ENCODE measurements at regions of chr11 and their contacts with region 1.

Region 1: DNA sequence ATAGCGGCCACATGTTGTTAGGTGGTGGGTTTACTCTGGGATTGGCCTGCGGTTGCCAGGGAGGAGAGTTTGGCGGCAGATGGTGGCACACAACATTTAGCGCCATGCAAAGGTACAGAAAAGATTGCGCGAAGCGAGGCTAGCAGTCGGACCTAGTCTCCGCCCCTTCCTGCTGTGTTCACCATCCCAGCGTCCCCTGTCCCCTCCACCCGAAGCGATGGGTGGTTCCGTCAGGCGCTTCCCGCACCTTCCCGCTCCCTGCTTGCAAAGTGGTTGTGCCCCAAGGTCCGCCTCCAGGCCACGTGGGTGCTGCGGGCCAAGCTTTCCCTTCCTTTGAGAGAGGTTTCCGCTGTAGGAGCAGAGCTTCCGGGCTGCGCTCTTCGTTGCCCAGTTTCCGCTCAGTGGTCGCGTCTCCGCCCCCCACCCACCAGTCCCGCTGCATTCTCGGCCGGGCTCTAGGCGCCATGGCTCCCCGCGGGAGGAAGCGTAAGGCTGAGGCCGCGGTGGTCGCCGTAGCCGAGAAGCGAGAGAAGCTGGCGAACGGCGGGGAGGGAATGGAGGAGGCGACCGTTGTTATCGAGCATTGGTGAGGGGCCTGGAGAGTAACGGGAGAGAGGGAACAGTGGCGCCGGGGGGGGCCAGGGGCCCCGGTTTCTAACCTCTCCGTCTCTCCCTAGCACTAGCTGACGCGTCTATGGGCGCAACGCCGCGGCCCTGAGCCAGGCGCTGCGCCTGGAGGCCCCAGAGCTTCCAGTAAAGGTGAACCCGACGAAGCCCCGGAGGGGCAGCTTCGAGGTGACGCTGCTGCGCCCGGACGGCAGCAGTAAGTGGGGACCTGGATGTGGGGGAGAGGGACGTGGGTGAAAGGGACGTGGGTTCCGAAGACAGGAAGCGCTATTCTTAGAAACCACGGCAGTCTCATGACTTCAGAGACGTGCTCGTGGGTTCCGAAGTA is at the start of gene SELENOH:
- DNase-seq: peak; percentile 93
- CTCF ChIP-seq: no peak

Region 2: GRCh38 chr11:57641011-57641807 is 100.2 kb before region 1 on chr11:
- in situ Hi-C with region 1: no loop called
- DNase-seq: peak; percentile 71
- CTCF ChIP-seq: peak; percentile 41

Region 3: DNA sequence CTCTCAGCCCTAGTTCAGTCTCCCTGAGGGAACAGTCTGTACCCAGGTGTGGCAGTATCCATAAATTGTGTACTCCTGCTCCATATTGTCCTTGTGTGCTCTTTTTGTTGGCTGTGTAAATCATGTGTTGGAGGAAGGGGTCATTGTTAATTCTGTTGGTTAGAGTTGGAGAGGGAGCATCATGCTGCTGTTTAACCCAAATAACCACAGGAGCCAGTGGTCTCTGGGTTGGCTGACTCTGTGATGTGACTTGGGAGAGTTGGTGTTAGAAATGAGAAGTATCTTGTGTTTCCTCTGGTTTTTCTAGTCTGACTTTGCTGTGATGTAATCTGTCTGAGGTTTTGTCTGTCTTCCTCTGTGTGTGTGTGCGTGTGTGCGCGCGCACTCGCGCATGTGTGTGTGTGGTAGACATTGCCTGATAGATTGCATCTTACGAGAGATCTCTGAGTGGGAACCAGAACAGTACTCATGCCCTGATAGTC is 50.7 kb after region 1 on chr11:
- in situ Hi-C with region 1: loop called (anchors 10 kb)
- DNase-seq: peak; percentile 86
- CTCF ChIP-seq: no peak

Region 4: GRCh38 chr11:58165504-58166106 is 424.2 kb after region 1 on chr11:
- in situ Hi-C with region 1: no loop called
- DNase-seq: no peak
- CTCF ChIP-seq: no peak